Activated CD8-positive, alpha-beta memory T cell treated with anti-CD3 and anti-CD28 coated beads, Interleukin-2, amount 10 ng/mL, durations not matched to agents 7 days and 5 days (primary cell): ENCODE measurements at regions of chr2 and their contacts with region 1.

Region 1: DNA sequence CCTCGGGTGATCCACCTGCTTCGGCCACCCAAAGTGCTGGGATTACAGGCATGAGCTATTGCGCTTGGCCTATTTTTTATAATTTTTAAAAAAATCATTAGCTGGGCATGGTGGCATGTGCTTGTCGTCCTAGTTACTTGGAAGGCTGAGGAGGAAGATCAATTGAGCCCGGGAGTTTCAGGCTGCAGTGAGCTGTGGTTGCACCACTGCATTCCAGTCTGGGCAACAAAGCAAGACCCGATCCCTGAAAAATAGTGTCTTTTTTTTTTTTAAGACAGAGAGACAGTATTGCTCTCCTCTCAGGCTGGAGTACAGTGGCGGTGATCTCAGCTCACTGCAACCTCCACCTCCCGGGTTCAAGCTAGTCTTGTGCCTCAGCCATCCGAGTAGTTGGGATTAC is 4.8 kb downstream of the SSB start:
- DNase-seq: no peak
- ATAC-seq: no peak
- H3K4me3 Mint-ChIP-seq: no peak overlapping the region
- H3K27ac Mint-ChIP-seq: no peak overlapping the region
- H3K4me1 Mint-ChIP-seq: peaks cover 37% of the 10 kb centered on the region
- H3K27me3 Mint-ChIP-seq: no peaks in the 10 kb centered on the region

Region 2: DNA sequence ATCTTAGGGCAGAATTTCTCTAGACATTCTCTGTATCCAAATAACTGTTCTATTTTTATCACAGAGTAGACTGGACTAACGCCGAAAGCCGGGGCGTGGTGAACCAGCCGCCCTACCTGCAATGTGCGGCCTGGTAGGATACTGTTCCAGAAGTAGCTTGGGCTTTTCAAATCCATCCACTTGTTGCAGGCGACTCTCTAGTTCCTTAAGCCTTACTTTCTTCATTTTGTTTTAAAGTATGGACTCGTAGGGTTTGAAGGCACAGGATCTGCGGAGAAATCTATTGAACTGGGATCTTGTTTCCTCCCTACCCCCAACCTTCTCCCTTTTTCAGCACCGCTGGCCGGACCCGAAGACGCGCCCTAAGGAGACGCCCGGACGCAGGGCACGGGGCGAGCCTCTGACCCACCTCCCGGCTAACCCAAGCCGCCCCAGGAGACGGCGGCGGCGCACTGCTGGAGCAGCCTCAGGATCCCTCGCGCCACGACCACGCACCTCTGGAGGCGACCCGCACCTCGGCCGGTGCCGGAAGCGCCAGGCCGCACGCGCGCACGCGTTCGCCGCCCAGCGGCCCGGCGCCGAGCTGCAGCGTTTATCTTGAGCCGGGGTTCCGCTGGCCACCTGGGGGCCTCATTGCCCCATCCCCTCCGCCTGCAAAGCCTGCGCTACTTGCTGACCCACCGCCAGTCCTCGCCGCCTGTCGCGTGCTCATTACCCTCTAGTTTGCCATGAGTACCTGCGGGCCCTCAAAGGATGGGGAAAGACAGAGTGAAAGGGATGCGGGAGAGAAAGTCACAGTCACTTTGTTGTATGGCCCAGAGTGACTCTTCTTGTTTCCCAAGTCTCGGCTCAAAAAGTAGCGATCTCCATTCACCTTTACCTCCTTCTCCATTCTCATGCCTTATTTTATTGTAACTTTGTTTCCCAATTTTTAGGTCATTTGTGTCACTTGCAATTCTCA is 21.2 kb after region 1 on chr2 and contains the start of gene METTL5:
- CTCF ChIA-PET with region 1: interaction called, 16 read pairs
- DNase-seq: peak; percentile 82
- ATAC-seq: peak; percentile 74
- H3K4me3 Mint-ChIP-seq: peak within 1 kb of the TSS; percentile 78
- H3K27ac Mint-ChIP-seq: peak within 1 kb of the TSS; percentile 84
- H3K4me1 Mint-ChIP-seq: peaks cover 64% of the 10 kb centered on the region
- H3K27me3 Mint-ChIP-seq: no peaks in the 10 kb centered on the region
- total RNA-seq, gene METTL5: 62.7 to 68.5 TPM